ENCODE measurements at regions of chr21 and their contacts with region 1.

Region 1: GRCh38 chr21:36330904-36331303 is 10.9 kb downstream of the MORC3 start:
- DNase-seq: peak; percentile 16
- ATAC-seq: peak; percentile 97
- H3K4me3 ChIP-seq: no peak overlapping the region
- H3K27ac ChIP-seq: no peak overlapping the region
- H3K4me1 ChIP-seq: 0 out of 2 replicates have a peak, but pooled peaks cover 3% of the 10 kb centered on the region
- H3K27me3 ChIP-seq: no peaks in the 10 kb centered on the region
- CTCF ChIP-seq: peak; percentile 72 to 79 (median 75); a peak in 5 of 6 replicates
- EP300 ChIP-seq: no peak
- POLR2A ChIP-seq: no peak
- RAD21 ChIP-seq: peak; percentile 87

Region 2: GRCh38 chr21:36141513-36141925 is 189.4 kb before region 1 on chr21:
- CTCF ChIA-PET with region 1: interaction called, 56 read pairs
- POLR2A ChIA-PET with region 1: no interaction called
- RAD21 ChIA-PET with region 1: interaction called, 4 read pairs
- SMC1A ChIA-PET with region 1: interaction called, 5 read pairs
- in situ Hi-C with region 1: loop called (anchors 5 kb)
- intact Hi-C with region 1: loop called (anchors 1 kb)
- DNase-seq: peak; percentile 53
- ATAC-seq: peak; percentile 98
- H3K4me3 ChIP-seq: no peak overlapping the region
- H3K27ac ChIP-seq: no peak overlapping the region
- H3K4me1 ChIP-seq: peaks cover 1% of the 10 kb centered on the region; the same call in 1 of the 2 replicates
- H3K27me3 ChIP-seq: peaks cover 0 to 1% of the 10 kb centered on the region in 2 experiments; a peak in 1 of 4 replicates
- CTCF ChIP-seq: peak; percentile 74 to 93 (median 85)
- EP300 ChIP-seq: no peak
- POLR2A ChIP-seq: no peak
- RAD21 ChIP-seq: peak; percentile 96

Region 3: DNA sequence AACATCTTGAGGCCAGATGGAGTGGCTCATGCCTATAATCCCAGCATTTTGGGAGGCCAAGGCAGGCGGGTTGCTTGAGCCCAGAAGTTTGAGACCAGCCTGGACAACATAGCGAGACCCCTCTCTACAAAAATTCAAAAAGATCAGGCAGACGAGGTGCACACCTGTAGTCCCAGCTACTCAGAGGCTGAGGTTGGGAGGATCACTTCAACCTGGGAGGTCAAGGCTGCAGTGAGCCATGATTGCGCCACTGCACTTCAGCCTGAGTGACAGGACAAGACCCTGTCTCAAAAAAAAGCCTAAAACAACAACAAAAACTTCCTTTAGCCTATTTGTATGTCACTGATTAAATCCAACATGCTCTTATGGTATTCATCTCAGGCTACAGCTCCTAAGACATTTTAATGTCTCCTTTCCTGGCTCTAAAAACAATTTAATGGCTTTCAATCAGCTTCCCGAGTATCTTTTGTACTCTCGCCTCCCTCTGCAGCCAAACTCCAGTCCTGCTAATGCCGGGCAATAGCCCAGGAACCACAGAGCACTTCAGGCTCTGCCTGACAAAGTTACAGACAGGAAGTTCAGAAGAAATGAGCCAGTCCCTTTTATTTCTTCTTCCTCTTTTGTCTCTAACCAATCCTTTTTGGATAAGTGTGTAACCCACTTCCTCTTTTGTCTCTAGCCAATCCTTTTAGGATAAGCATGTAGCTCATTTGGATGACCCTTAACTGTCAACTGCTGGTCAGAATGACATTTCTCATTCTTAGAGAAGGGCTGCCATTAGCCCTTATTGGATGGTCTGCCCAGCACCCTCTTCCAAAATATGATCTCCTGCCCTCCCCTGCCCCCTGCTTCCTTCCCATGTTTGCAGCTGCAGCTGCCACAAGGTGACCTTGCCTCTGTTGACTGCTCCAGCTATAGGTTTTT is 180.9 kb before region 1 on chr21:
- CTCF ChIA-PET with region 1: interaction called, 77 read pairs
- POLR2A ChIA-PET with region 1: interaction called, 5 read pairs
- RAD21 ChIA-PET with region 1: interaction called, 8 read pairs
- SMC1A ChIA-PET with region 1: interaction called, 12 read pairs
- in situ Hi-C with region 1: no loop called
- intact Hi-C with region 1: no loop called
- DNase-seq: peak; percentile 42
- ATAC-seq: peak; percentile 92
- H3K4me3 ChIP-seq: no peak overlapping the region
- H3K27ac ChIP-seq: no peak overlapping the region
- H3K4me1 ChIP-seq: peaks cover 10% of the 10 kb centered on the region
- H3K27me3 ChIP-seq: no peaks in the 10 kb centered on the region
- CTCF ChIP-seq: no peak
- EP300 ChIP-seq: no peak
- POLR2A ChIP-seq: peak; percentile 67
- RAD21 ChIP-seq: no peak

Region 4: GRCh38 chr21:36156339-36156814 is 174.5 kb before region 1 on chr21:
- CTCF ChIA-PET with region 1: interaction called, 77 read pairs
- POLR2A ChIA-PET with region 1: no interaction called
- RAD21 ChIA-PET with region 1: interaction called, 8 read pairs
- SMC1A ChIA-PET with region 1: interaction called, 12 read pairs
- in situ Hi-C with region 1: no loop called
- intact Hi-C with region 1: no loop called
- DNase-seq: peak; percentile 87
- ATAC-seq: peak; percentile 95
- H3K4me3 ChIP-seq: peak overlapping the region; percentile 87; the same call in 1 of the 2 replicates
- H3K27ac ChIP-seq: no peak overlapping the region; the same call in 1 of the 2 replicates
- H3K4me1 ChIP-seq: peaks cover 9% of the 10 kb centered on the region
- H3K27me3 ChIP-seq: no peaks in the 10 kb centered on the region
- CTCF ChIP-seq: no peak
- EP300 ChIP-seq: no peak
- POLR2A ChIP-seq: no peak
- RAD21 ChIP-seq: no peak

Region 5: DNA sequence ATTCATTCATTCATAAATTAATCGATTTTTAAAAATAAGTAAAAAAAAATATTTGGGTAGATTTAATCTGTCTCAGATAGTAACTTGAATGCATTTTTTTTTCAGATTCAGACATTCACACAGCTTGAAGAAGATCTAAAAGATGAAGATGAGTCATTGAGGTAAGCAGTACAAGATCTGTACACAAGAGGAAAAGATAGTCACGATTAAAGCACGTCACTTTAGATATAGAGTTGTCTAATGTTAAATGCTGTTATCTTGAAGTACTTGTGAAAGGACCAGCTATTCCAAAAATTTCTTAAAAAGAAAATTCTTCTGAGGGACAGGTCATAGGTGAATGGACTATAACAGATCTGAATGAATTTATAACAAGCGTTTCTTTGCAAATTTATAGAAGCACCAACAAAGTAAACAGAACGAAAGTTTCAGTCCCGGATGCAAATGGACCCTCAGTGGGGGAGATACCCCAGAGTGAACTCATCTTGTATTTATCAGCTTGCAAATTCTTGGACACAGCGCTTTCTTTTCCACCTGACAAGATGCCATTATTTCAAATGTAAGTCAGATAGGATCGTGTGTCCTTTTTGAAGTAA is 42.2 kb before region 1 on chr21:
- CTCF ChIA-PET with region 1: no interaction called
- POLR2A ChIA-PET with region 1: no interaction called
- RAD21 ChIA-PET with region 1: interaction called, 3 read pairs
- SMC1A ChIA-PET with region 1: interaction called, 5 read pairs
- in situ Hi-C with region 1: no loop called
- intact Hi-C with region 1: loop called (anchors 2 kb)
- DNase-seq: no peak
- ATAC-seq: peak; percentile 59
- H3K4me3 ChIP-seq: peak overlapping the region; percentile 37; the same call in 1 of the 2 replicates
- H3K27ac ChIP-seq: peak overlapping the region; percentile 35
- H3K4me1 ChIP-seq: peaks cover 16% of the 10 kb centered on the region
- H3K27me3 ChIP-seq: no peaks in the 10 kb centered on the region
- CTCF ChIP-seq: no peak
- EP300 ChIP-seq: no peak
- POLR2A ChIP-seq: no peak
- RAD21 ChIP-seq: no peak

Measured in GM12878 (cell line).